IMR-90 (cell line): ENCODE measurements at regions of chr20 and their contacts with region 1.

Region 1: DNA sequence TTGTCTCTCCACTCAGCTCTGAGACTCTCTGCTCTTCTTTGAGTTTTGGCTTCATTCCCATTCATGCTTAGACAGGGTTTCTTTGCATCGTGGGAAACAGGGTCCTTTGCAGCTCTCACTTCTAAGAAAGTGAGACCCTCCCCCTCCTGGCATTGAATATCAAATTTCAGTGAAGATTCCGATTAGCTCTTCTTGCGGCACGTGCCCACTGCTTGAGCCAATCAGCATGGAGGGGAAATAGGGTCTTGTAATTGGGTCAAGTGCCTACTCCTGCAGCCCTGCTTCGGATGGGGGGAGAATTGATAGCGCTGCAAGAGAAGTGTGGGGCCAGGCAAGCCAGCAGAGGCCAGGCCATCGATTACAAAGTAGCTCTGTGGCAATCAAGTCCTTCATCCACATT is 69.6 kb downstream of the TFAP2C start:
- DNase-seq: no peak
- ATAC-seq: no peak
- H3K4me3 ChIP-seq: no peak overlapping the region
- H3K27ac ChIP-seq: no peak overlapping the region
- H3K4me1 ChIP-seq: no peaks in the 10 kb centered on the region
- H3K27me3 ChIP-seq: peaks cover 4% of the 10 kb centered on the region; the same call in 1 of the 2 replicates
- CTCF ChIP-seq: no peak
- POLR2A ChIP-seq: no peak
- RAD21 ChIP-seq: no peak

Region 2: DNA sequence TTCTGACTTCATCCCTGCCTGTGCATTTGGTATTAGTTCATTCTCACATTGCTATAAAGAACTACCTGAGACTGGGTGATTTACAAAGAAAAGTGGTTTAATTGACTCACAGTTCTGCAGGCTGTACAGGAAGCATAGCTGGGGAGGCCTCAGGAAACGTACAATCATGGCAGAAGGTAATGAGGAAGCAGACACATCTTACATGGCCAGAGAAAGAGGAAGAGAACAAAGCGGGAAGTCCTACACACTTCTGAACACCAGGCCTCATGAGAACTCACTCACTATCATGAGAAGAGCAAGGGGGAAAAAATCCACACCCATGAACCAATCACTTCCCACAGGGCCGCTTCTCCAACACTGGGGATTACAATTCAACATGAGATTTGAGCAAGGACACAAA is 997.3 kb before region 1 on chr20:
- CTCF ChIA-PET with region 1: no interaction called
- POLR2A ChIA-PET with region 1: no interaction called
- dilution Hi-C with region 1: no loop called
- in situ Hi-C with region 1: no loop called
- intact Hi-C with region 1: loop called (anchors 5 kb)
- DNase-seq: no peak
- ATAC-seq: no peak
- H3K4me3 ChIP-seq: no peak overlapping the region
- H3K27ac ChIP-seq: no peak overlapping the region
- H3K4me1 ChIP-seq: no peaks in the 10 kb centered on the region
- H3K27me3 ChIP-seq: no peaks in the 10 kb centered on the region
- CTCF ChIP-seq: no peak
- POLR2A ChIP-seq: no peak
- RAD21 ChIP-seq: no peak

Region 3: DNA sequence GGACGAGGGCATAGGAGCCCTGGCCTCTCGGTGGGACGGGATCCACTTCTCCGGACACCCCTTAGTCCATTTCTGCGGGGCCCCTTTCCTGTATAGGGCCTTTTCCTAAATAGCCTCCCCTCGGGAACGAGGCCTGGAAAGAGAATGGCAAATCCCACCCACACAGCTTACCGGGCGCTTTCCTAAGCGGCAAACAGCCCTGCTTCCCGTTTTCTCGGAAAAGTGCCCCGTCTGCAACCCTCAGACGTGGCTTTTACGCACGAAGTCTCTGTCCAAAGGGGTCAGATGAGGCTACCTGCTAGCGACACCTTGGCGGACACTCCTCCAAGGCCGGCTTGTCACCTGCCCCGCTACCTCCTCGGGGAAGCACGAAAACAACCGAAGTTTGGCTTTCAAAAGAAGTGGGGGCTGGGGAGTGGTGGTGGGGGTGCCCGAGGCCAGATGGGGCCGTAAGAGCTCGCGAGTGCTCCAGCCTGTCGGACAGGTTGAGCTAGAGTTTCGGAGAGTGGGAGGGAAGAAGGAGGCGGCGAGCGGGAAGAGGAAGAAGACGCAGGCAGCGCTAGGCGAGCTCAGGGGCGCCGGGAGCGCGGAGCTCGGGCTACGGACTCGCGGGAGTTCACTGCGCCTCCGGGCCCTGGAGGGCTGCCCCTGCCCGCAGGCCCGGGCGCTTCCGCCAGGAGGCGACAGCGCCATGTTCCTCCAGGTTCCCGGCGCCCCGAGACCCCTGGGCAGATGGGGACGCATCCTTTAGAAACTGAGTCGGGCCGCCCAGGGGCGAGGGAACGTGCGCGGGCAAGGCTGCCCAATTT is 68.9 kb before region 1 on chr20:
- CTCF ChIA-PET with region 1: no interaction called
- POLR2A ChIA-PET with region 1: no interaction called
- dilution Hi-C with region 1: no loop called
- in situ Hi-C with region 1: no loop called
- intact Hi-C with region 1: no loop called
- DNase-seq: no peak
- ATAC-seq: 0 out of 2 replicates have a peak, but pooled peaks have one; percentile 18
- H3K4me3 ChIP-seq: no peak overlapping the region
- H3K27ac ChIP-seq: no peak overlapping the region
- H3K4me1 ChIP-seq: no peaks in the 10 kb centered on the region; the same call in 1 of the 2 replicates
- H3K27me3 ChIP-seq: peaks cover 87% of the 10 kb centered on the region
- CTCF ChIP-seq: peak; percentile 30; the same call in 1 of the 2 replicates
- POLR2A ChIP-seq: no peak
- RAD21 ChIP-seq: peak; percentile 24; the same call in 1 of the 2 replicates